ENCODE measurements at regions of chr4 and their contacts with region 1.

Region 1: GRCh38 chr4:48002267-48002666 is 14.2 kb downstream of the CNGA1 start:
- DNase-seq: no peak
- H3K4me3 ChIP-seq: no peak overlapping the region
- CTCF ChIP-seq: no peak

Region 2: DNA sequence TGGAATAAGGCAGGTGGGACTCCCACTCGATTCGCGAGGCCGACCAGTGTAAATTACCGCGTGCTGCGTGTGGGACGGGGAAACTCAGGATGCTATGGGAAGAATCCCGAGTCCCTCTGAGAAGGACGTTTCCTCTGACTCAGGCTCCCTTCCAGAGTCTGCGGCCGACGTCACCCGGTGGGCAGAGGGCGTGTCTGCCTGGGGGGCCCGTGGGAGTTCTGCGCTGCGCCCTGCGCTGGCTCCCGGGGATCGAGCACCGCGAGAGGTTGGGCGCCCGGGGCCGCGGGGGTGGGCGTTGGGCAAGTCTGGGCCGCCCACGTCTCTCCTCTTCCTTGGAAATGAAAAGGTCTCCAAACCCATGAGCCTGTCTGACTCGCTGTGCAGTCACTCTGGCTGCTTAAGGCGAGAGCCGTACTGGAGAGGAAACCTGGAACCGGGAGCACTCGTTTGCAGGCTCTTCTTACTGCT is 14.9 kb after region 1 on chr4:
- CTCF ChIA-PET with region 1: interaction called, 11 read pairs
- POLR2A ChIA-PET with region 1: no interaction called
- DNase-seq: no peak
- H3K4me3 ChIP-seq: peak overlapping the region; percentile 65
- CTCF ChIP-seq: no peak

Region 3: GRCh38 chr4:48085821-48086607 is 83.7 kb after region 1 on chr4:
- CTCF ChIA-PET with region 1: interaction called, 34 read pairs
- POLR2A ChIA-PET with region 1: no interaction called
- DNase-seq: no peak
- H3K4me3 ChIP-seq: no peak overlapping the region
- CTCF ChIP-seq: no peak

Measured in AG04449 (cell line).